HCT116 (cell line): ENCODE measurements at regions of chr7 and their contacts with region 1.

Region 1: GRCh38 chr7:144513334-144513733 is 109.8 kb upstream of the NOBOX start:
- DNase-seq: peak; percentile 35
- ATAC-seq: peak; percentile 83
- H3K4me3 ChIP-seq: no peak overlapping the region
- H3K27ac ChIP-seq: no peak overlapping the region
- H3K4me1 ChIP-seq: no peaks in the 10 kb centered on the region
- H3K27me3 ChIP-seq: no peaks in the 10 kb centered on the region
- CTCF ChIP-seq: peak; percentile 23 to 55 (median 32); a peak in 4 of 6 replicates
- POLR2A ChIP-seq: no peak
- RAD21 ChIP-seq: peak; percentile 73

Region 2: GRCh38 chr7:144481833-144482232 is 31.5 kb before region 1 on chr7:
- CTCF ChIA-PET with region 1: no interaction called
- POLR2A ChIA-PET with region 1: no interaction called
- RAD21 ChIA-PET with region 1: no interaction called
- intact Hi-C with region 1: no loop called
- DNase-seq: no peak
- ATAC-seq: no peak
- H3K4me3 ChIP-seq: no peak overlapping the region
- H3K27ac ChIP-seq: no peak overlapping the region
- H3K4me1 ChIP-seq: no peaks in the 10 kb centered on the region
- H3K27me3 ChIP-seq: no peaks in the 10 kb centered on the region
- CTCF ChIP-seq: no peak
- POLR2A ChIP-seq: no peak
- RAD21 ChIP-seq: no peak

Region 3: GRCh38 chr7:144497282-144497681 is 16.1 kb before region 1 on chr7:
- CTCF ChIA-PET with region 1: no interaction called
- POLR2A ChIA-PET with region 1: no interaction called
- RAD21 ChIA-PET with region 1: no interaction called
- intact Hi-C with region 1: no loop called
- DNase-seq: no peak
- ATAC-seq: no peak
- H3K4me3 ChIP-seq: no peak overlapping the region
- H3K27ac ChIP-seq: no peak overlapping the region
- H3K4me1 ChIP-seq: no peaks in the 10 kb centered on the region
- H3K27me3 ChIP-seq: no peaks in the 10 kb centered on the region
- CTCF ChIP-seq: no peak
- POLR2A ChIP-seq: no peak
- RAD21 ChIP-seq: no peak

Region 4: DNA sequence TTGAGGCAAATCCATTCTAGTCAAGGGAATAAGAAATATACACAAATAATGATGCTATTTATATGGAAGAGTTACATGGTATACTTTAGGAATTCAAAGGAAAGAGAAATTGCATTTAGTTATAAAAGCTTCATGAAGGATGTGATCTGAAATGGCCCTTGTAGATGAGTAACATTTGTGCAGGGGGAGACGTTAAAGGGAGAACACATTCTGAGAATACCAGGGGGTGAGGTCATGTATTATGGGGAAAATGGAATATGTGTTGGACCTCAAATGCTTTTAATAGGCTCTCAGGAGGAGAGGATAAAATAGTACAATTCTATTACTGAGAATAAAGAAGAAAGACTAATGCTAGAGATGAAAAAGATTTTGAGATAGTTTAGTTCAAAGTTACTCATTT is 12.6 kb after region 1 on chr7:
- CTCF ChIA-PET with region 1: no interaction called
- POLR2A ChIA-PET with region 1: no interaction called
- RAD21 ChIA-PET with region 1: no interaction called
- intact Hi-C with region 1: loop called (anchors 2 kb)
- DNase-seq: no peak
- ATAC-seq: no peak
- H3K4me3 ChIP-seq: no peak overlapping the region
- H3K27ac ChIP-seq: no peak overlapping the region
- H3K4me1 ChIP-seq: no peaks in the 10 kb centered on the region
- H3K27me3 ChIP-seq: no peaks in the 10 kb centered on the region
- CTCF ChIP-seq: no peak
- POLR2A ChIP-seq: no peak
- RAD21 ChIP-seq: no peak

Region 5: DNA sequence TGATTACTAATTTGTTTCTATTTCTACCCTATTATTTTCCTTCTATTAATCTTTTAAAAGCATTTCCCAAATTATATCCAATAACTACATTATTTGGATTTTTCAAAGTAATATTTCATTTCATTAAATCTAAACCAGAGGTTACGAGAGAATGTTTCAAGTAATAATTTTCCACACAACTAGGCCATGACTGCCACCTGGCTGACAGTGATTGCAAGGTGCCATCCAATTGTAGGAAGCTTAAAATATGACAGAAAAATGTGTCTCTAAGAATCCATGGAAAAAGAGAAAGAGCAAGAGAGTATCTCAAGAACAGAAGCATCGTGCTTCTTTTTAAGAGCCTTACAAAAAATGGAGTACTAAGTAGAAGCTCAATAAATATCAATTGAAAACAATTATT is 273.8 kb after region 1 on chr7:
- CTCF ChIA-PET with region 1: no interaction called
- POLR2A ChIA-PET with region 1: no interaction called
- RAD21 ChIA-PET with region 1: no interaction called
- intact Hi-C with region 1: loop called (anchors 1 kb)
- DNase-seq: peak; percentile 18
- ATAC-seq: peak; percentile 52; the same call in 1 of the 2 replicates
- H3K4me3 ChIP-seq: no peak overlapping the region
- H3K27ac ChIP-seq: no peak overlapping the region
- H3K4me1 ChIP-seq: no peaks in the 10 kb centered on the region
- H3K27me3 ChIP-seq: no peaks in the 10 kb centered on the region
- CTCF ChIP-seq: peak; percentile 39 to 45 (median 42); a peak in 4 of 6 replicates
- POLR2A ChIP-seq: no peak
- RAD21 ChIP-seq: peak; percentile 59

Region 6: GRCh38 chr7:146090023-146090645 is 1576.8 kb after region 1 on chr7:
- CTCF ChIA-PET with region 1: no interaction called
- POLR2A ChIA-PET with region 1: no interaction called
- RAD21 ChIA-PET with region 1: no interaction called
- intact Hi-C with region 1: loop called (anchors 5 kb)
- DNase-seq: peak; percentile 10
- ATAC-seq: 0 out of 2 replicates have a peak, but pooled peaks have one; percentile 49
- H3K4me3 ChIP-seq: no peak overlapping the region
- H3K27ac ChIP-seq: no peak overlapping the region
- H3K4me1 ChIP-seq: no peaks in the 10 kb centered on the region
- H3K27me3 ChIP-seq: no peaks in the 10 kb centered on the region
- CTCF ChIP-seq: peak; percentile 35 to 60 (median 37); a peak in 4 of 6 replicates
- POLR2A ChIP-seq: no peak
- RAD21 ChIP-seq: peak; percentile 56